ENCODE measurements at regions of chr9 and their contacts with region 1.

Region 1: GRCh38 chr9:27726244-27727081 is 153.2 kb upstream of the C9orf72 start:
- DNase-seq: peak in 8 of 10 donors; percentile 34 to 91 (median 67)

Region 2: GRCh38 chr9:27573634-27574590 is 152.6 kb before region 1 on chr9:
- intact Hi-C with region 1: loop called (anchors 10 kb)
- DNase-seq: peak; percentile 81 to 98 (median 93)

Region 3: DNA sequence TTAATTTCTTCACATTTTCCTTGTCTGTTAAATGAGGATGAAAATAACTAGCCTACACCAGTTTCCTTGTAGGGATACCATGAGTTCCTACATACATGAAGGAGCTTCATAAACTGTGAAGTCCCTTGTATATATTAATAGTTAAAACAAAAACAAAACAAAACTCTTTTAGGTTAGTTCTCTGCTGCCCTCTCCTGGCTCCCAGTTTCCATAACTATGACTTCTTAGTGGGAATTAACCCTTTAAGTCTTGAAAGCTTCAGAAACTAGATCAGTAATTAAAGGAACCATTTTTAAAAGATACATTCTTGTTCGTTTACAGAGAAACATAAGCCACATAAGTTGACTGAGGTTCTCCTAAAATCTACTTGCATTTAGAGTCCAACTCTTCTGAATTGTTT is 346.8 kb after region 1 on chr9:
- intact Hi-C with region 1: loop called (anchors 2 kb)
- DNase-seq: peak in 3 of 10 donors; percentile 16 to 32 (median 23)

Region 4: DNA sequence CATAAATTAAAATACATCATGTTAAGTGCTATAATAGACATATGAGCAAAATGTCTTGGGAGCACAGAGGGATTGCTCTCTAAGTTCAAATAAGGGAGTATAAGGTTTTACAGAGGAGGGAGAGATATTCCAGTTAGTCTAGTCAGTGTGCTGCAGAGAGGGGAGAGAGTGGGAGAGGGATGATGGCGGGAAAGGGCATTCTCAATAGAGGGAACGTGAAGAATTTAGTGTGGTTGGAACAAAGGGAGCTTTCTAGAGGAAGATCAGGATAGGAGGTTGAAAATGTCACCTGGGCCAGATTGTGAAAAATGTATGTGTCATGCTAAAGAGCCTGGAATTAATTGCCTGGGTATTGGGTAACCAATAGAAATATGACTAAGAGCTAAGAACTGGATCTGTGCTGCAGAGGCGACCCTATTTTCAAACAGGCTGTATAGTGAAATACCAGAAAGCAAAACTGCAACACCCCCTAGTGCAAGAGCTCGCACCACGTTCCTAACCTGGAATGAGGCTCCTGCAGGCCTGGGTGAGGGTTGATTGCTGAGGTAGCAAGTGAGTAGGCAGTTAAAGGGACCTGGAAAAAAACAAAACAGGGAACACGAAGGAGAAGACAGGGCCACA is 638.7 kb after region 1 on chr9:
- intact Hi-C with region 1: loop called (anchors 10 kb)
- DNase-seq: peak in 5 of 10 donors; percentile 2 to 34 (median 8)

Region 5: DNA sequence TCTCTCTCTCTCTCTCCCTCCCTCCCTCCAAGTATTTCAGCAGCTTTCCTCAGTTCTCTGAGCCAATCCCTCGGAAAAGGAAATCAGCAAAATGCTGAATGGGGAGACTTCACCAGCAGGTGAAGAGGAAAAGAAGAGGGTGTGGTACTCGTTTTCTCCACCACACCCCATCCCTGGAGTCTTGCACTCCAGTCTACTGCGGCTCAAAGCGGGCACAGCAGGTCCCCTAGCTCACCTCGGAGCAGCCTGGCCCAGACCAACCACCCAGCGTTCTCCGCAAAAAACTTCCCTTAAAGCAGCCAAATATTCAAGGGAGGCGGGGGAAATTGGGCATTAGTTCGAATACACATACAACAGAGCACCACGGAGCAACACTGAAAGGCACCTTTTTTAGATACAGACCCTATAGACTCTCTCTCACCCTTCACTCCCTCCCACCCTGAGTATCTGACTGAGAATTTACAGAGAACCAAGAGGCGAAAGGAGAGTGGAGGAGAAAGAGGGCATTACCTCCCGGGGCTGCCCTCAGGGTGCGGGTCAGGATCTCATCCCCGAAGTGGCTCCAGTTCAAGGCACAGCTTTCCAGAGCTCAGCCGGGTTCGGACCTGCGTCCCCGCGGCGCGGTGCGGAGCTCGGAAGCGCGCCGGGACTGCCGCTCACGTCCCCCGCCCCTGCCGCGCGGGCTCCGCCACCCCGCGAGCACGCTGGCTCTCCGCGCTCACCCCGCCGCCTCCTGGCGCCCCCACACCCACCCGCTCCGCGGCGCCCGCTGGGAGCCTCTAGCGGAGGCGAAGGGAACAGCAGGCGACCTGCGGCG is 1485.3 kb after region 1 on chr9:
- intact Hi-C with region 1: loop called (anchors 10 kb)
- DNase-seq: peak; percentile 41 to 94 (median 60)

Measured in posterior cingulate gyrus (tissue), 11 donors.